ENCODE measurements at regions of chr5 and their contacts with region 1.

Region 1: GRCh38 chr5:97231025-97231636 is 48.1 kb upstream of the RIOK2 start:
- DNase-seq: no peak
- H3K4me3 ChIP-seq: no peak overlapping the region
- H3K27ac ChIP-seq: peak overlapping the region in 2 of 4 donors; percentile 26 to 28
- H3K4me1 ChIP-seq: peaks cover 0 to 6% (median 2%) of the 10 kb centered on the region in 4 donors
- H3K27me3 ChIP-seq: no peaks in the 10 kb centered on the region
- CTCF ChIP-seq: peak; percentile 70 to 84 (median 78)
- EP300 ChIP-seq: no peak
- POLR2A ChIP-seq: no peak

Region 2: GRCh38 chr5:97534166-97534565 is 303.0 kb after region 1 on chr5:
- intact Hi-C with region 1: loop called (anchors 5 kb)
- DNase-seq: no peak
- H3K4me3 ChIP-seq: no peak overlapping the region
- H3K27ac ChIP-seq: peak overlapping the region in 1 of 4 donors; percentile 27
- H3K4me1 ChIP-seq: peaks cover 0 to 17% (median 6%) of the 10 kb centered on the region in 4 donors
- H3K27me3 ChIP-seq: no peaks in the 10 kb centered on the region
- CTCF ChIP-seq: peak; percentile 60 to 71 (median 62)
- EP300 ChIP-seq: no peak
- POLR2A ChIP-seq: no peak

Region 3: DNA sequence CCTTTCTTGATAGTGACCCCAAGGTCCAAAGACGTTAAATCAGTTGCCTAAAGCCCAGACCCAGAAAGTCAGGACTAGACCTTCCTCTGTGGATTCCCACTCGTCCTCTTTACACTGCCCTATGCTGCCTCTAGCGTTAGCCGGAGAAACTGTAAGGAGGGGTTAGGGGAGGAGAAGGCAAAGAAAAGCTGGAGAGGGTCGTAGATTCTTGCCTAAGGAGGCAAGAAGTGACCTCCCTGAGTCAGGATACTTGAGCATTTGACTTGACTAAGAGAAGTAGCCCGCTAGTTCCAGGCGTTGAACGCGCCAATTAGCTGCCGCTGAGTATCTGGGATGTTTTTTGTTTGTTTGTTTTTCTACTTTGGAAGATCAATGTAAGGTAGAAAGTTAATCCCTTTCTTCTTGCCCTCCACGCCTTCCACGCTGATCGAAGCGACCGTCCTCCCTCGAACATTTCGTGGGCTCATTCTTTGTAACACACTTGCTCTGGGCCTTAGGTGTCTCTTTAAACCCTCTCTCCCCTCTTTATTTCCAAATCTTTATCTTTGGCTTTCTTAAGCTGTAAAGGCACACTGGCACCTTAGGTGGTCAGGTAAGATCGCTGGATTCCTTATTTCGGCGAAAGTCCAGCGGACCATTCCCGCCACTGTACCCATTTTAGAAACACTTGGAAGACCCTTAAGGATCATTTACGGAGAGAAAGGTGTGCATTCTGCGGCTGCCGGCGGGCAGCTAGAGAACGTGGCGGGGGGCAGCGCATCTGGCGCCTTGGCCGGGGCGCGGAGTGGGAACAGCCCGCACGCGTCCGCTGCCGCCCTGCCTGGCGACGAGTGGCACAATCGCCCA is 1537.3 kb after region 1 on chr5:
- intact Hi-C with region 1: loop called (anchors 2 kb)
- DNase-seq: no peak
- H3K4me3 ChIP-seq: peak overlapping the region; percentile 81 to 94 (median 90)
- H3K27ac ChIP-seq: peak overlapping the region; percentile 93 to 94 (median 93)
- H3K4me1 ChIP-seq: peaks cover 13 to 39% (median 32%) of the 10 kb centered on the region in 4 donors
- H3K27me3 ChIP-seq: no peaks in the 10 kb centered on the region
- CTCF ChIP-seq: peak; percentile 79 to 93 (median 88)
- EP300 ChIP-seq: no peak
- POLR2A ChIP-seq: no peak

Region 4: GRCh38 chr5:98827161-98827560 is 1596.0 kb after region 1 on chr5:
- intact Hi-C with region 1: loop called (anchors 5 kb)
- DNase-seq: no peak
- H3K4me3 ChIP-seq: no peak overlapping the region
- H3K27ac ChIP-seq: no peak overlapping the region
- H3K4me1 ChIP-seq: no peaks in the 10 kb centered on the region
- H3K27me3 ChIP-seq: no peaks in the 10 kb centered on the region
- CTCF ChIP-seq: peak; percentile 58 to 67 (median 59)
- EP300 ChIP-seq: no peak
- POLR2A ChIP-seq: no peak